Panc1 (cell line): ENCODE measurements at regions of chr1 and their contacts with region 1.

Region 1: DNA sequence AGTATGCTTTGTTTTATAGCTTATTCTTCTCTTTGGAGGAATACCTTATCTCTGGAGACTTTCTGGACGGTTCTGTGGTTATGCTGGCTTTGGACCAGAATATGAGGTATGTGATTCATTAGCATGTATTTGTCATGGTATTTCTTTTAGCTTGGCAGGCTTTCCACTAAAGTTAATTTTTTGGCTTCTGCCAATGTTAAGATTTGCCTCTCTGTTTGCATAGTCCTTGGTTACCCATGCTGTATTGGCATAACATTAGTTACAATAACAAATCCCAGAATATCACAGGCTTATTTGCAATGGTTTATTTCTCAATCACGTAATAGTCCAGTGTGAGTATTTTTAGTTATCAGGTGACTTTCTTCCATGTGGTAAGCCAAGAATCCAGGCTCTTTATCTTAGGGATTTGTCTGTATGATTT is 9.7 kb downstream of the ZMPSTE24 start:
- DNase-seq: no peak
- ATAC-seq: no peak
- H3K4me3 ChIP-seq: no peak overlapping the region
- H3K27ac ChIP-seq: no peak overlapping the region
- H3K4me1 ChIP-seq: no peaks in the 10 kb centered on the region
- H3K27me3 ChIP-seq: no peaks in the 10 kb centered on the region
- CTCF ChIP-seq: no peak

Region 2: DNA sequence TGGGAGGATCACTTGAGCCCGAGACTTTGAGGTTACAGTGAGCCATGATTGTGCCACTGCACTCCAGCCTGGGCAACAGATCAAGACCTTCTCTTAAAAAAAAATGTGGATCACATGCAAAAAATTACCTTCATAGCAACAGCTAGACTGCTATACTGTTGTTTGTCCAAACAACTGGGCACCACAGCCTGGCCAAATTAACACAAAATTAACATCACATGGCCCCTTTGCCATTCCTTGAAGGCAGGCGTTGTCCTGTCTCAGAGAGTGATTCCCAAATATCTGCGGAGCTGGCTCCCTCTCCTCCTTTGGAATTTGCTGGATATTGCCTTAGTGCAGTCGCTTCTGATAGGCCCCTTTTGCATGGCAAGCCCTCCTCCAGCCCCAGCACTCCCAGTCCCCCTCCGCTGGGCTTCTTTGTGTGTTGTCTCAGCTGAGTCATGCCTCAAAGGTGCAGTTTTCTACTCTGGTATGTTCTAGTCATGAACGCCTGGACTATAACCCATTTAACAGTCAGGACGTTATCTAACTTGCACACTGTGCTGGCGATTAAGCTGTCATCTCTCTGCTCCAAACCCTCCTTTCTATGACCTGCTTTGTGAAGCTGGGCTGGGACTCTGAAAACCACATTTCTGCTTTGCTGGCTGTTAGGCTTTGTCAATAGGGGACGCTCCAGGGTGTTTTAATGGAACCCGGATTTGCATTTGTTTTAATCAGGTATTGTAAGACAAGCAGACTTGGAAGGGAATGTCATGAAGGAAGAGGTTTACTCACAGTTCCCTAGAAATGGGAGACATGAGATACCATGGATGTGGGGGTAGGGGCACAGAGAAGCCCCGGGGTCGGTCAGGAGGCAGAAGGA is 556.4 kb before region 1 on chr1:
- CTCF ChIA-PET with region 1: interaction called, 10 read pairs
- POLR2A ChIA-PET with region 1: no interaction called
- in situ Hi-C with region 1: no loop called
- intact Hi-C with region 1: no loop called
- DNase-seq: no peak
- ATAC-seq: no peak
- H3K4me3 ChIP-seq: no peak overlapping the region
- H3K27ac ChIP-seq: no peak overlapping the region
- H3K4me1 ChIP-seq: no peaks in the 10 kb centered on the region
- H3K27me3 ChIP-seq: peaks cover 3% of the 10 kb centered on the region; the same call in 1 of the 2 replicates
- CTCF ChIP-seq: no peak

Region 3: DNA sequence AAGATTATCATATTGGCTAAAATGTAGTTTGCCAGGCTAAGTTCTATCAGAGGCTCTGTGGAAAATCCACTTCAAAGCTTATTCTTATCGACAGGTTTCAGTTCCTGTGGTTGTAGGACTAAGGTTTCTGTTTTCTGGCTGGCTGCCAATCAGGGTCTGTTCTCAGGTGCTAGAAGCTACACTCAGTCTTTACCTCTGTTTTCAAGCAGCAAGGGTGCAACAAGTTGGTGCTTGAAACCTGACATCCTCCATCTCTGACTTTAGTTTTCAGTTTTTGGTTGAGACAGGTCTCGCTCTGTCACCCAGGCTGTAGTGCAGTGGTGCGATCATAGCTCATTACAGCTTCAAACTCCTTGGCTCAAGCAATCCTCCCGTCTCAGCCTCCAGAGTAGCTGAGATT is 35.3 kb before region 1 on chr1:
- CTCF ChIA-PET with region 1: interaction called, 11 read pairs
- POLR2A ChIA-PET with region 1: no interaction called
- in situ Hi-C with region 1: no loop called
- intact Hi-C with region 1: no loop called
- DNase-seq: no peak
- ATAC-seq: no peak
- H3K4me3 ChIP-seq: no peak overlapping the region
- H3K27ac ChIP-seq: no peak overlapping the region
- H3K4me1 ChIP-seq: no peaks in the 10 kb centered on the region
- H3K27me3 ChIP-seq: no peaks in the 10 kb centered on the region
- CTCF ChIP-seq: no peak

Region 4: GRCh38 chr1:40299366-40300248 is 31.8 kb after region 1 on chr1:
- CTCF ChIA-PET with region 1: no interaction called
- POLR2A ChIA-PET with region 1: no interaction called
- in situ Hi-C with region 1: no loop called
- intact Hi-C with region 1: no loop called
- DNase-seq: no peak
- ATAC-seq: peak; percentile 25; the same call in 1 of the 2 replicates
- H3K4me3 ChIP-seq: no peak overlapping the region
- H3K27ac ChIP-seq: no peak overlapping the region
- H3K4me1 ChIP-seq: no peaks in the 10 kb centered on the region
- H3K27me3 ChIP-seq: no peaks in the 10 kb centered on the region
- CTCF ChIP-seq: no peak